ENCODE measurements at regions of chr6 and their contacts with region 1.

Region 1: DNA sequence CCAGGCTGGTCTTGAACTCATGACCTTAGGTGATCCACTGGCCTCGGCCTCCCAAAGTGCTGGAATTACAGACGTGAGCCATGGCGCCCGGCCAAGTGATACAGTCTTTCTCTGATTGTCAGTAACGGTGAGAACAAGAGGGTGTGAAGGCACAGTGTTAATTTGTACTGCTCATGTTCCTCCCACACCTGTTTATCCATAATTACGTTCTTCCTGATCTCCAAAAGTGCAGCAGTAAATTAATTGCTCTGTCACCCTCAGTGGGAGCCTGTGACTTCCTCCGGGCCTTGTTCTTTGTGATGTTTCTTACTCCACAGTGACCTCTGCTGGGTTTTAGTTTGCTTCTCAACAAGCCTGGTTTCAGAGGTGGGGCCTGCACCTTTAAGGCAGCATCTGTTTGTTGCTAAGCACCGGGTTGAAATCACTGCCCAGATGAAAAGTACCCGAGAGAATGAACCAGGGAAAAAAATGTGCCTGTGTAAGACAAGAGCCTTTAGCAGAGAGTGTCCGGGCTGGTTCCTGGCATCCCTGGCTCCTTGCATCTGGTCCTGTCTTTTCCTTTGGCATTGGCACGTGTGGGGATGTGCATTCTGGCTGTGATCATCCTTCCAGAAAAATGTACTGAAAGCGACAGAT is 89.1 kb upstream of the CLDN20 start:
- DNase-seq: peak; percentile 73
- H3K4me3 Mint-ChIP-seq: no peak overlapping the region
- H3K27ac Mint-ChIP-seq: peak overlapping the region; percentile 7
- H3K4me1 Mint-ChIP-seq: peaks cover 50% of the 10 kb centered on the region
- H3K27me3 Mint-ChIP-seq: no peaks in the 10 kb centered on the region

Region 2: DNA sequence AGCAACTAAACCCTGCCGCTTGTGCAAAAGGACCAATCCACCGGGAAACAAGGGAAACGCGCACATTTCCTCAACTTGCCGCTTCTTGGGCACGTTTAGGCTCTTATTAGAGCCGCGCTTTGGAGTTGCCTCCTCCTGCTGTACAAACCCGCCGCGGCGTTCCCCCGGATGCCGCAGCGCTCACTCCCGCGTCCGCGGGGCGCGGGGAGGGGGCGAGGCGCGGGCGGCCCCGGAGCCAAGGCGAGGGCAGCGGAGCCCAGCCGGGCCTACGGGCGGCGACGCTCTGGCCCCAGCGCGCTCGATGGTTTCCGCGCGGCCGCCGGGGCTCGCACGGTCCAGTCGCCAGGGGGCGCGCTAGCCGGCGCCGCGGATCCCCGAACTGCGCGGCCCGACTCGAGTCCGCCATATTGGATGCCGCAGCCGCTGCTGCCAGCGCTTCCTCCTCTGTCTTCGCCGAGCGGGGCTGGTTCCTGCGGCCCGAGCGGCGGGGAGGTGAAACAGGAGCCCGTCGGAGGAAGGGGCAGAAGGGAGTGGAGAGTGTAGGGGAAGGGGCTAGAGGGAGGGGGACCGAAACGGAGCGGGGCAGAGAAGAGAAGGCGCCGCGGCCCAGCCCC is 441.6 kb before region 1 on chr6 and contains the start of gene SCAF8:
- CTCF ChIA-PET with region 1: interaction called, 3 read pairs
- POLR2A ChIA-PET with region 1: no interaction called
- intact Hi-C with region 1: loop called (anchors 1 kb)
- DNase-seq: peak; percentile 86
- H3K4me3 Mint-ChIP-seq: peak within 1 kb of the TSS; percentile 85
- H3K27ac Mint-ChIP-seq: peak within 1 kb of the TSS; percentile 84
- H3K4me1 Mint-ChIP-seq: peaks cover 34% of the 10 kb centered on the region
- H3K27me3 Mint-ChIP-seq: no peaks in the 10 kb centered on the region
- total RNA-seq, gene SCAF8: 30.1 to 31.7 TPM

Region 3: DNA sequence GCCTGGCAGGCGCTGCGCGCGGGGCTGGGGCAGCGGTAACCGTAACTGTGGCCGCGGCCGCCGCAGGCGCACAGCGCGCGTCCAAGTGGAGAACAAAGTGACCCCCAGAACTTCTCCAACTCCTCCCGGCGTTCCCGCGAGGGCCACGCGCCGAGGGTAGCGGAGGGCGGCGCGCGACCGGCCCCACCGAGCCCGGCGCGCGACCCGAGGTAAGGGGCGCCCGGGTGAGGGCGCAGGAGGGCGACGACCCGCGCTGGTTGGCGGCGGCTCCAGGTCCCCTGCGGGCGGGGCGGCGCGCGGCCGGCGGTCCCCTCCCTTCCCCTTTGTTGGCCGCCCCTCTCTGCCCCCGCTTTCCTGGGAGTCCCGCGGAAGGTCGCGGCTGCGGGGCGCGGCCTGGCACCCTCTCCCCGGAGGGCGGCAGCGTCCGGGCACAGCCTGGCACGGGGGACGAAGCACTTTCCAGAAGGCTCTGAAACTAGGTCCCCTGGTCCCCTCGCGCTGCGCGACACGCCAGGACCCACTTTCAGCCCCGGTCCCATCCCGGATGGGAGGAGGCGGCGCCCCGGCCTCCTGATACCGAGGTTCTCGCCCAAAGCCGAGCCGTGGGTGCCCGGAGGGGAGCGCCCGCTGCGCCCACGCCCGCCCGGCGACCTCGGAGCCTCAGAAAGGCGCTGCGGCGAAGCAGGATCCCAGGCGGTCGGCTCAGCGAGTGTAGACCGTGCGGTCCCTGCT is 179.2 kb before region 1 on chr6 and contains the start of gene TIAM2:
- CTCF ChIA-PET with region 1: no interaction called
- POLR2A ChIA-PET with region 1: no interaction called
- intact Hi-C with region 1: loop called (anchors 2 kb)
- DNase-seq: peak; percentile 46
- H3K4me3 Mint-ChIP-seq: peak within 1 kb of the TSS; percentile 59
- H3K27ac Mint-ChIP-seq: no peak within 1 kb of the TSS
- H3K4me1 Mint-ChIP-seq: peaks cover 10% of the 10 kb centered on the region
- H3K27me3 Mint-ChIP-seq: peaks cover 22% of the 10 kb centered on the region
- total RNA-seq, gene TIAM2: 10.6 to 11.0 TPM

Region 4: GRCh38 chr6:155154158-155154830 is 20.4 kb before region 1 on chr6:
- CTCF ChIA-PET with region 1: interaction called, 25 read pairs
- POLR2A ChIA-PET with region 1: interaction called, 38 read pairs
- intact Hi-C with region 1: loop called (anchors 1 kb)
- DNase-seq: peak; percentile 64
- H3K4me3 Mint-ChIP-seq: peak overlapping the region; percentile 1
- H3K27ac Mint-ChIP-seq: peak overlapping the region; percentile 93
- H3K4me1 Mint-ChIP-seq: peaks cover 73% of the 10 kb centered on the region
- H3K27me3 Mint-ChIP-seq: no peaks in the 10 kb centered on the region

Region 5: GRCh38 chr6:155196911-155197310 is 22.2 kb after region 1 on chr6:
- CTCF ChIA-PET with region 1: no interaction called
- POLR2A ChIA-PET with region 1: no interaction called
- intact Hi-C with region 1: no loop called
- DNase-seq: no peak
- H3K4me3 Mint-ChIP-seq: no peak overlapping the region
- H3K27ac Mint-ChIP-seq: no peak overlapping the region
- H3K4me1 Mint-ChIP-seq: no peaks in the 10 kb centered on the region
- H3K27me3 Mint-ChIP-seq: no peaks in the 10 kb centered on the region

Region 6: DNA sequence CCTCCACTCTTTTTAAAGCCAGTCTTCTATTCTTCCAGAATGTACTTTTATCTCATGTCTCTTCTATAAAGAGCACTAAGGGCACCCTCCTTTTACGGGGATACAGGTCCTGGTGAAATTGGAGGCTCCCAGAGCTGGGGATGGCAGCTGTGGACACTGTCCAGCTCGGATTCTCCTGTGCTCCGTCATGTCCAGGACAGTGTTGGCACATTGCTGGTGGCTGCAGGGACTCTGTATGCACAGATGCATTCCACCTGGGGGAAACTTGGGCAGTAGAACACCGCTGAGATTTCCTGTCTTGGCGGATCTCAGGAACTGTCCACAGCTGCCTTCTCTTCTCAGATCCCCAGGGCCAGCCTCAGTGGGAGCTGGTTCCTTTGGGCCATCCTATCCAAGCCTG is 32.5 kb after region 1 on chr6:
- CTCF ChIA-PET with region 1: no interaction called
- POLR2A ChIA-PET with region 1: no interaction called
- intact Hi-C with region 1: no loop called
- DNase-seq: no peak
- H3K4me3 Mint-ChIP-seq: no peak overlapping the region
- H3K27ac Mint-ChIP-seq: no peak overlapping the region
- H3K4me1 Mint-ChIP-seq: no peaks in the 10 kb centered on the region
- H3K27me3 Mint-ChIP-seq: no peaks in the 10 kb centered on the region

Region 7: DNA sequence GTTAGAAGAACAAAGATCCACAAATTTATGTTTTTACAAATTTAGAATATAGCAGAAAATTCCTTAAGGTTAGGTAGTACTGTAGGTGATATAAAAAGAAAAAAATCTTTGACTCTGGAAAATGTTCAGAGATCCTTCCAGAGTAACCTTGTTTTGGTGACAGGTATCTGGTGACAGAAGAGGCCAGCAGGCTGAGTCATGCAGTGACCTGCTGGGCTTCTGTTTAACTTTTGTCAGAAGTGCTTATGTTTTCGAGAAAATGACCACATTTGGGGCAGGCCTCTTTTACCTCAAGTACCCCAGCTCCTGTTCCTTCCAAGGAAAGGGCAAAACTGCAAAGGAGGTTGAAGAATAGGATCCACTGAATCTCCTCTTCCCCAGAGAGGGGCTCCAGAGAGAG is 78.6 kb after region 1 on chr6:
- CTCF ChIA-PET with region 1: interaction called, 75 read pairs
- POLR2A ChIA-PET with region 1: no interaction called
- intact Hi-C with region 1: loop called (anchors 1 kb)
- DNase-seq: no peak
- H3K4me3 Mint-ChIP-seq: no peak overlapping the region
- H3K27ac Mint-ChIP-seq: peak overlapping the region; percentile 6
- H3K4me1 Mint-ChIP-seq: no peaks in the 10 kb centered on the region
- H3K27me3 Mint-ChIP-seq: no peaks in the 10 kb centered on the region

Region 8: DNA sequence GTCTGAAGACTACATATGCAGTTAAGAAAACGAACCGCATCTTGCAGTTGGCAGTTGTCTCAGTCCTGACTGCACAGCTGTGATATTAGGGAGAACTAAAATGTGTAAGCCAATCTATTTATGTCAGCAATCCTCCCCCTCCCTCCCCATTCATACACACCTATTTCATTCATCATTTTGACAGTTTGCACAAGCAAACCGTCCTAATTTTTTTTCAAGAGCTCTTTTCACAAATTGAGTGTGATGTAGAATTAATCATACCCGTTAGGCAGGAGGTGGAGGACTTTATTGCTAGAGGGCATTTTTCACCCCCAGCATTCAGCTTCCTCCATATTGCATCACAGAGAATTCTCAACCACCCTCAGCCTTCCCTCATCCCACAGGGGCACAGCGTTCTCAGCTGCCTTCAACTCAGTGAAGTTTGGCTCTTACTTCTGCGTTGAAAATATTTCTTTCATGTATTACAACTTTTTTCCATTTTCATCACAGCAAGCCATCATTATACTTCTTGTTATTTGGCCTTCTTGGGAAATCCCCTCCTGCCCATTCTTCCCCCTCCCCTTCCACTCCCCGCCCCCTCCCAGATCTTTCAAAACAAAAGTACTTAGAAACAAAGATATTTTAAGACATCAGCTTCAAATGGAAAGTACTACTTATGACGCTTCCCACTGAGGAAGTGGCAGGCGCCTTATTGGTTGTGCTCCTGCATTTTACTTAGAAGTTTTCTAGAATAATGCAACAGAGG is 243.5 kb after region 1 on chr6:
- CTCF ChIA-PET with region 1: no interaction called
- POLR2A ChIA-PET with region 1: no interaction called
- intact Hi-C with region 1: loop called (anchors 2 kb)
- DNase-seq: peak; percentile 87
- H3K4me3 Mint-ChIP-seq: peak overlapping the region; percentile 38
- H3K27ac Mint-ChIP-seq: peak overlapping the region; percentile 98
- H3K4me1 Mint-ChIP-seq: peaks cover 55% of the 10 kb centered on the region
- H3K27me3 Mint-ChIP-seq: no peaks in the 10 kb centered on the region

Region 9: DNA sequence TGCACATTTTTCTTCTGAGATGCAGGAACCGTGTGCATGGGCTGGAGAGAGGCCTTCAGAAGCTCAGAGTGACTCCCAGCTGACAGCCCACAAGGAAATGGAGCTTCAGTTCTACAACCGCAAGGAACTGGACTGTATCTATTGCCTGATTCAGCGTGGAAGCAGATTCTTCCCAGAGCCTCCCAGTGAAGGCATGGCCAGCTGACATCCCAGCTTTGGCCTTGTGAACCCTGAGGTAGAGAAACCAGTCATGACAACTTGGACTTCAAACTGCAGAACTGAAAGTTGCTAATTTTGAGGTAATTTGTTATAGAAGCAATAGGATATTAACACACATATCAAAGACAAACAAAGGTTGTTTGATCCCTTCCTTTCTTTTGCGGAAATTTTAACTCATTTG is 375.2 kb after region 1 on chr6:
- CTCF ChIA-PET with region 1: no interaction called
- POLR2A ChIA-PET with region 1: no interaction called
- intact Hi-C with region 1: no loop called
- DNase-seq: no peak
- H3K4me3 Mint-ChIP-seq: no peak overlapping the region
- H3K27ac Mint-ChIP-seq: no peak overlapping the region
- H3K4me1 Mint-ChIP-seq: no peaks in the 10 kb centered on the region
- H3K27me3 Mint-ChIP-seq: no peaks in the 10 kb centered on the region

Region 10: DNA sequence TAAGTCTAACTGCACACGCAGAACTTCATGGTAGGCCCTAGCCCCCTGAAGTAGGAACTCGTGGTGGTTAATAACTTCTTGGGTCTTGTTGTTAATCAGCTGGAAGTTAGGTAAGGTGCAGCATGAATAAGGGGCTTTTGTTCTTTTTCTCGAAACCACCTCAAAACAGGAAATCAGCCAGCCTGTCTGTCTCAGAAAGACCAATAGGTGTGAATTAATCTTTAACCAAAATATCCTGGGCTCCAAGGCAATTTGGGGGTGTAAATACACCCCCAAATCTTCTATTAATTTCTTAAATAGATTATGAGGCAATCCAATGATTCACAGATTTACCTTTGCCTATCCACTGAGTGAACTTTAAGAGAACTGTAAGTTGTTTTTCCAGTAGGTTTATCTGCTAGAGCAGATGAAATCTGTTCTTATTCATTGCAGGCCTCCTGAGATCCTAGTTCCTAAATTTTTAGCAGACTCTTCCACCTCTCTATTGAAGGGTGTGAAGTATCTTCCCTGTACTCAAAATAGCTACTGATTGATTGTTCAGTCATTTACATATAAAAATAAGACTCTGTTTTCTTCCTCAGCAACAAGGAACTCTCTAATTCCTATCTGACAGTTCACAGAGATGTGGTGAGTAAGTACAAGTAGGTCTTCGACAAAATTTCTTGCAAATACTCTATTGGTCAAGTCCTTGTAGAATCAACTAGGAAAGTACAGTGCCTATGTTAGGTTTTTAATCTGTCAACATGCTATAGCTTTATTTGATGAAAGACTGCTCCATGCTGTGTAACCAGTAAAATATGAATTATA is 708.0 kb after region 1 on chr6:
- CTCF ChIA-PET with region 1: no interaction called
- POLR2A ChIA-PET with region 1: no interaction called
- intact Hi-C with region 1: no loop called
- DNase-seq: no peak
- H3K4me3 Mint-ChIP-seq: no peak overlapping the region
- H3K27ac Mint-ChIP-seq: no peak overlapping the region
- H3K4me1 Mint-ChIP-seq: peaks cover 22% of the 10 kb centered on the region
- H3K27me3 Mint-ChIP-seq: no peaks in the 10 kb centered on the region